ENCODE measurements at regions of chr12 and their contacts with region 1.

Region 1: GRCh38 chr12:49842519-49843352 is at the start of gene BCDIN3D:
- DNase-seq: peak; percentile 83 to 95 (median 91)
- ATAC-seq: peak; percentile 96
- H3K4me3 ChIP-seq: peak within 1 kb of the TSS; percentile 73
- H3K4me3 Mint-ChIP-seq: peak within 1 kb of the TSS; percentile 85 to 100 (median 94)
- H3K27ac ChIP-seq: peak within 1 kb of the TSS; percentile 80
- H3K27ac Mint-ChIP-seq: peak within 1 kb of the TSS; percentile 90 to 98 (median 96)
- H3K4me1 ChIP-seq: peaks cover 12 to 20% of the 10 kb centered on the region in 2 donors
- H3K4me1 Mint-ChIP-seq: peaks cover 19 to 65% (median 43%) of the 10 kb centered on the region in 7 donors
- H3K27me3 ChIP-seq: no peaks in the 10 kb centered on the region
- H3K27me3 Mint-ChIP-seq: no peaks in the 10 kb centered on the region
- total RNA-seq, gene BCDIN3D: 3.7 to 17.4 (median 6.8) TPM

Region 2: GRCh38 chr12:48716493-48717251 is 1126.1 kb before region 1 on chr12 and contains the start of gene CCNT1:
- CTCF ChIA-PET with region 1: no interaction called
- POLR2A ChIA-PET with region 1: no interaction called
- intact Hi-C with region 1: loop called in 1 of 2 experiments (anchors 10 kb)
- DNase-seq: peak; percentile 90 to 100 (median 99)
- ATAC-seq: peak; percentile 93
- H3K4me3 ChIP-seq: peak within 1 kb of the TSS; percentile 88
- H3K4me3 Mint-ChIP-seq: peak within 1 kb of the TSS; percentile 89 to 98 (median 94)
- H3K27ac ChIP-seq: peak within 1 kb of the TSS; percentile 95
- H3K27ac Mint-ChIP-seq: peak within 1 kb of the TSS; percentile 95 to 99 (median 98)
- H3K4me1 ChIP-seq: peaks cover 14 to 24% of the 10 kb centered on the region in 2 donors
- H3K4me1 Mint-ChIP-seq: peaks cover 21 to 50% (median 37%) of the 10 kb centered on the region in 7 donors
- H3K27me3 ChIP-seq: no peaks in the 10 kb centered on the region
- H3K27me3 Mint-ChIP-seq: peaks cover 0 to 4% (median 0%) of the 10 kb centered on the region in 5 donors
- total RNA-seq, gene CCNT1: 62.5 to 127 (median 76.6) TPM

Region 3: GRCh38 chr12:49567611-49568441 is 274.9 kb before region 1 on chr12 and contains the start of gene MCRS1:
- CTCF ChIA-PET with region 1: no interaction called
- POLR2A ChIA-PET with region 1: no interaction called
- intact Hi-C with region 1: loop called in 1 of 2 experiments (anchors 5 kb)
- DNase-seq: peak; percentile 89 to 94 (median 91)
- ATAC-seq: peak; percentile 92
- H3K4me3 ChIP-seq: peak within 1 kb of the TSS; percentile 81
- H3K4me3 Mint-ChIP-seq: peak within 1 kb of the TSS; percentile 94 to 100 (median 99)
- H3K27ac ChIP-seq: peak within 1 kb of the TSS; percentile 91
- H3K27ac Mint-ChIP-seq: peak within 1 kb of the TSS; percentile 98 to 100 (median 99)
- H3K4me1 ChIP-seq: peaks cover 33 to 42% of the 10 kb centered on the region in 2 donors
- H3K4me1 Mint-ChIP-seq: peaks cover 45 to 76% (median 61%) of the 10 kb centered on the region in 7 donors
- H3K27me3 ChIP-seq: no peaks in the 10 kb centered on the region
- H3K27me3 Mint-ChIP-seq: peaks cover 0 to 3% (median 0%) of the 10 kb centered on the region in 5 donors
- total RNA-seq, gene MCRS1: 70.0 to 85.2 (median 71.4) TPM

Region 4: DNA sequence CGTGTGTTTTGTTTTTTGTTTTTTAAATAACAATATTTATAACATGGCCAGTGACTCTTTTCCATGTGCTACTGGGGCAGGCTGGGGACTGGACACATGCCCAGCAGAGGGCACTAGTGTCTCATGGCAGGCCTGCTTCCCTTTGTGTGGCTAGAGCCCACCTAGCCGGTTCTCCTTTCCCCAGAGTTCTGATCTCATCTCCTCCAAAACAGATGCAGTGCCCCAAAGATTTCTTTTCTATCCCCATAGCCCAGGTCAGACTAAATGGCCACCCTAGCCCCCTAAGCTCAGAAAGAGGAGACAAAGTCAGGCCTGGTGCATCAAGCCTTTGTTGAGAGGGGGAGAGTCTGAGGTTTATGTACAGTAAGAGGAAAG is 198.1 kb before region 1 on chr12:
- CTCF ChIA-PET with region 1: interaction called, 5 read pairs
- POLR2A ChIA-PET with region 1: no interaction called
- intact Hi-C with region 1: loop called (anchors 1 kb)
- DNase-seq: peak; percentile 71 to 86 (median 81)
- ATAC-seq: peak; percentile 96
- H3K4me3 ChIP-seq: no peak overlapping the region
- H3K4me3 Mint-ChIP-seq: peak overlapping the region in 9 of 10 donors; percentile 3 to 69 (median 41)
- H3K27ac ChIP-seq: peak overlapping the region; percentile 32
- H3K27ac Mint-ChIP-seq: peak overlapping the region; percentile 78 to 96 (median 89)
- H3K4me1 ChIP-seq: peaks cover 7 to 10% of the 10 kb centered on the region in 2 donors
- H3K4me1 Mint-ChIP-seq: peaks cover 25 to 56% (median 37%) of the 10 kb centered on the region in 7 donors
- H3K27me3 ChIP-seq: no peaks in the 10 kb centered on the region
- H3K27me3 Mint-ChIP-seq: no peaks in the 10 kb centered on the region

Region 5: DNA sequence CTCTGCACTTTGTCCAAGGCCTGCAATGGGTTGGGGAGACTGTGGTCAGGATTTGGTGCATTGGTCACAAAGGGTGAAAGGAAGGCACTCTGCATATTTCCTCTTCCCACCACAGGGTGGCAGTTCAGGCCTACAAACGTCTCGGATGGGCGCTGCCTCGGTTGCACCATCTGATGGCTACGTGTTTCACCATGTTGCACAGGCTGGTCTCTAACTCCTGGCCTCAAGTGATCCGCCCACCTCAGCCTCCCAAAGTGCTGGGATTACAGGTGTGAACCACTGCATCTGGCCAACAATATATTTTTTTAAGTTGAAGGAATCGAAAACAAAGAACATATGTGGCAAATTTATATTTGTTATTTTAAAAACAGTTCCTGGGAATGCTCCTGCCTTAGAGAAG is 66.3 kb before region 1 on chr12:
- CTCF ChIA-PET with region 1: interaction called, 33 read pairs
- POLR2A ChIA-PET with region 1: interaction called, 4 read pairs
- intact Hi-C with region 1: loop called (anchors 1 kb)
- DNase-seq: peak in 8 of 9 donors; percentile 21 to 52 (median 36)
- ATAC-seq: peak; percentile 85
- H3K4me3 ChIP-seq: no peak overlapping the region
- H3K4me3 Mint-ChIP-seq: peak overlapping the region in 2 of 10 donors; percentile 12 to 27
- H3K27ac ChIP-seq: no peak overlapping the region
- H3K27ac Mint-ChIP-seq: peak overlapping the region in 2 of 9 donors; percentile 25 to 56
- H3K4me1 ChIP-seq: peaks cover 0 to 8% of the 10 kb centered on the region in 2 donors
- H3K4me1 Mint-ChIP-seq: peaks cover 10 to 17% (median 13%) of the 10 kb centered on the region in 7 donors
- H3K27me3 ChIP-seq: peaks cover 0 to 8% of the 10 kb centered on the region in 2 donors
- H3K27me3 Mint-ChIP-seq: peaks cover 6 to 27% (median 20%) of the 10 kb centered on the region in 5 donors

Region 6: DNA sequence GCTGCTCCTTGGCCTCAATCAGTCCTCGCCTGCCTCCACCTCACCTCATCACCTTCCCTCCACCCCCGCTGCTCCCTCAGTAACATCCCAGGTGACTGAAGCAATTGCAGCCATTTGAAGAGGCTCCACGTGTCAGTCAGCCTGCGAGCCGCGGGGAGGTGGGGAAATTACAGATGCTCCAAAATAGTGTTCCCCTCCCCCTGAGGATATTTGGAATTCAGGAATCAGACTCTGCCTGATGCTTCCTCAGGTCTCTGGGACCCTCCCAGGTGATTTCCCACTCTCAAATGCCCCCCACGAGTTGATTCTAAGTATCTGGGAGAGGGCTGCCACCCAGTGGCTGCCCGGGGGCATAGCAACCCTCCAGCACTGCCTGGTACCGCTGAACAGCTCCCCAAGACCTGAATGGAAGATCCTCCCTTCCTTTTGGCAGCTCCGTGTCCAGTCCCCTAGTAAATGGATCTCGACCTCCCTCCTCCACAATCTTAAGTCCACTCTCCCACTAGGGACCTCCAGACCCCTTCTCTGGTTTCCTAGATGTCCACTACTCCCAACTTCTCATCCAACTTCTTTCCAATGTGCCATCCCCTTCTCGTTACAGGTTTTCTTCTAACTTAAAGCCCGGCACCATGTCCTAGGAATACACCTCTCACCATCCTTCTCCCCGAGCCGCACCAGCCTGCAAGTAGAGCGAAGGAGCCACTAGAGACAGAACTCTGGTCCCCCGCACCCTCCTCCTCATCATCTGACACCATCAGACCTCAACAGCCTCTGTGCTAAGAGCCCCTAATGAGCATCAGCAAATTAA is 213.3 kb after region 1 on chr12:
- CTCF ChIA-PET with region 1: no interaction called
- POLR2A ChIA-PET with region 1: no interaction called
- intact Hi-C with region 1: loop called in 1 of 2 experiments (anchors 10 kb)
- DNase-seq: peak; percentile 41 to 64 (median 56)
- ATAC-seq: peak; percentile 79
- H3K4me3 ChIP-seq: peak overlapping the region; percentile 42
- H3K4me3 Mint-ChIP-seq: peak overlapping the region; percentile 66 to 96 (median 92)
- H3K27ac ChIP-seq: no peak overlapping the region
- H3K27ac Mint-ChIP-seq: peak overlapping the region in 2 of 9 donors; percentile 46 to 57
- H3K4me1 ChIP-seq: peaks cover 7 to 31% of the 10 kb centered on the region in 2 donors
- H3K4me1 Mint-ChIP-seq: peaks cover 17 to 48% (median 41%) of the 10 kb centered on the region in 7 donors
- H3K27me3 ChIP-seq: peaks cover 0 to 9% of the 10 kb centered on the region in 2 donors
- H3K27me3 Mint-ChIP-seq: peaks cover 38 to 56% (median 48%) of the 10 kb centered on the region in 5 donors